HEK293 (cell line): ENCODE measurements at regions of chr13 and their contacts with region 1.

Region 1: DNA sequence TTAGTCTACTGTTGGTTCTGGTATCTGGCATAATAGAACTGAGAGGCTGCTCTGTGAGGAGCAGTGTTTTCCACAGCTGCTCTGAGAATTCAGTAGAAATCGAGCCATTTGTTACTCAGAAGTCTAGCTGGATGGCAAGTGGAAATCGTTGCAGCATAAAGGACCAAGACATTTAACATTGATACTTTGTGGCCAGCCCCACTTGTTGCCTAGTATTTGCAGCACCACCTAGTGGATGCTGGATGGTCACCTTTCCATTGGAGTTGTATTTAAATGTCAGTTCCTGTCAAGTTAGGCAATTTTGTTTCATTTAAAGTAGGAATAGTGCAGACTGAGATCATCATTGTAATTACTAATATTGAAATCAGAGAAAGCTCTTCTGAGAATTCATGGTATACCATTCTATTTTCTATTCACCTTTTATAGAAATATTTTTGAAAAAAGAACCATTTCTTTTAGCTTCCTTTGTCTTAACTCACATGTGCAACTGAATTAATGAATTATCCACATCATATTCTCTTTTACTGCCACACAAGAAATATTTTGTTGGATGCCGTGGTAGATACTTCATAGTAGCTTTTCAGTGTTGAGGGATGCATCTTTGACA is 64.6 kb downstream of the PDS5B start:
- H3K4me3 ChIP-seq: no peak overlapping the region
- H3K27ac ChIP-seq: no peak overlapping the region
- H3K4me1 ChIP-seq: peaks cover 10% of the 10 kb centered on the region; the same call in 1 of the 2 replicates
- CTCF ChIP-seq: peak; percentile 47; the same call in 1 of the 2 replicates

Region 2: GRCh38 chr13:32639502-32640105 is 11.2 kb before region 1 on chr13:
- CTCF ChIA-PET with region 1: interaction called, 14 read pairs
- POLR2A ChIA-PET with region 1: no interaction called
- H3K4me3 ChIP-seq: no peak overlapping the region
- H3K27ac ChIP-seq: no peak overlapping the region
- H3K4me1 ChIP-seq: peaks cover 2% of the 10 kb centered on the region
- CTCF ChIP-seq: no peak

Region 3: DNA sequence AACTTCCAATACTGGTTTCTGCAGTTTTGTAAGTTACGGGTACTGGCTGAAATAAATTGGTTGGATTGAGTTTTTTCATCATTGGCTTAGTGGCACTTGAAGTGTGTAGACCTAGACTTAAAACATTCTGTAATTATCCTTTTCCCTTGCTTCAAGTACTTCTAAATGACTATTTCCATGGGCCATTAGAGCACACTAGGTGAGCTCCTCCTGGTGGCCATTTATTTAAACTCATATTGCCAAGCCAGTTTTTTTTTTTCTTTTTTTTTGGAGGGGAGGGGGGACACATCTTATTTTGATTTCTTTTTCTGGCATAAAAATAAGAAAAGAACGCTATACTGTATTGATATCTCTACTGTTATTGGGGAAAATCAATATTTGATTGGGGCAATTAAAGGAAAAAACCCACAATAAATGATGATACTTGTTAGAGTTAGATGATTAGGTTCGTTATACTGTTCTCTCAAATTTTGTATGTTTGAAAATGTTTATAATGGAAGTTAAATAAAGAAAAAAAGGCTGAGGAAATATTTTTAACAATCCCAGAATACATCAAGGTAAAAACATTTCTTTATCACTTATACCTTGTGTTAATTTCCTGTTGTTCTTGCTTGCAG is 18.3 kb after region 1 on chr13:
- CTCF ChIA-PET with region 1: interaction called, 11 read pairs
- POLR2A ChIA-PET with region 1: no interaction called
- H3K4me3 ChIP-seq: no peak overlapping the region
- H3K27ac ChIP-seq: no peak overlapping the region
- H3K4me1 ChIP-seq: no peaks in the 10 kb centered on the region
- CTCF ChIP-seq: peak; percentile 36; the same call in 1 of the 2 replicates